AG04449 (cell line): ENCODE measurements at regions of chr12 and their contacts with region 1.

Region 1: DNA sequence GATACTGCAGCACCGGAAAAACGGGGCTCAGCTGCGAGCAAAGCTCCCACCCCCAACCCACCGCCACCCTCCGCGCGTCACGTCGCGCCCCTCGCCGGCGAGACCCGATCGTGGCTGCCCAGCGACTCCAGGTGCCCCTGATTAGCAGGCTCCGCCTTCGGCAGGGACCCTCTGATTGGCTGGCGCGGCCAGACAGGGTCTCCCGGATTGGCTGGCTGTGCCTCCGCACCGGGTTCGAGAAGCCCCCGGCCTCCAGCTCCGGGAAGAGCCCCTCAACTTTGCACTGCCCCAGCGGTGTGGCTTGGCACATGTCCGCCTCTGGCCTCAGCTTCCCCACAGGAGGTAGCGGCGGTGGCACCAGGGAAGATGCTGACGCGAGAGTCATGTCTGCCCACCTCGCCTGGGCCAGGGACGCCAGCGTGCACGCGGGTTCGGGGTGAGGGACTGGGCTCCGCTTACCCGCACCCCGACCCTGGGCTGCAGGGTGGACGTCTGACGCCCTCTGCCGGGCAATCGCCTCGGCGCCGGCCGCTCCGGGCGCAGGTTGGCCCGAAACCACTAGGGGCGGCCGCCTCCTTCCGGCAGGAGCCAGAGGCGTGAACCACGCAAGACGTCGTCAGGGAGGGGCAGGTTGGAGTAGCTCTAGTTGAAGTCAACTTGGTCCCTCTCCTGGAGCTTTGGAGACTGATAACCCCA is 498 bp upstream of the RHOF start:
- DNase-seq: peak; percentile 69
- H3K4me3 ChIP-seq: peak overlapping the region; percentile 59
- CTCF ChIP-seq: peak; percentile 100

Region 2: DNA sequence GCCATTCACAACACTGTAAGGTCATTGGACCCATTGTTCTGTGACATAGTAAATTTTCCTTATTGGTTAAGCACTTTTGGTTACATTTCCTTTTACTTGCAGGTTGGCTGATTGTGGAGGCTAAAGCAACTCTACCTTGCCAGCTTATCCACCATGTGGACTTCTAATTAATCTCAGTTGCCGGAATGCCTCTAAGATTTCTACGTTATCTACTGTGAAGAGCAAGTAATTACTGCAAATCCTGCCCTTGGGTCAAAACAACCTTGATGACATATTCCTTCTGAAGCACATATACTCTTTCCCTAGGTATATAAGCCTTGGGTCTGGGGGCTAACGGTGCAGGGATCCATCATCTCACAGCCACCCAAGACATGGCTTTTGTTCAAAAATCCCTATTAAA is 105.0 kb before region 1 on chr12:
- CTCF ChIA-PET with region 1: interaction called, 95 read pairs
- POLR2A ChIA-PET with region 1: no interaction called
- DNase-seq: no peak
- H3K4me3 ChIP-seq: no peak overlapping the region
- CTCF ChIP-seq: no peak

Region 3: GRCh38 chr12:121719926-121720414 is 74.0 kb before region 1 on chr12:
- CTCF ChIA-PET with region 1: interaction called, 30 read pairs
- POLR2A ChIA-PET with region 1: no interaction called
- DNase-seq: peak; percentile 44
- H3K4me3 ChIP-seq: no peak overlapping the region
- CTCF ChIP-seq: no peak

Region 4: DNA sequence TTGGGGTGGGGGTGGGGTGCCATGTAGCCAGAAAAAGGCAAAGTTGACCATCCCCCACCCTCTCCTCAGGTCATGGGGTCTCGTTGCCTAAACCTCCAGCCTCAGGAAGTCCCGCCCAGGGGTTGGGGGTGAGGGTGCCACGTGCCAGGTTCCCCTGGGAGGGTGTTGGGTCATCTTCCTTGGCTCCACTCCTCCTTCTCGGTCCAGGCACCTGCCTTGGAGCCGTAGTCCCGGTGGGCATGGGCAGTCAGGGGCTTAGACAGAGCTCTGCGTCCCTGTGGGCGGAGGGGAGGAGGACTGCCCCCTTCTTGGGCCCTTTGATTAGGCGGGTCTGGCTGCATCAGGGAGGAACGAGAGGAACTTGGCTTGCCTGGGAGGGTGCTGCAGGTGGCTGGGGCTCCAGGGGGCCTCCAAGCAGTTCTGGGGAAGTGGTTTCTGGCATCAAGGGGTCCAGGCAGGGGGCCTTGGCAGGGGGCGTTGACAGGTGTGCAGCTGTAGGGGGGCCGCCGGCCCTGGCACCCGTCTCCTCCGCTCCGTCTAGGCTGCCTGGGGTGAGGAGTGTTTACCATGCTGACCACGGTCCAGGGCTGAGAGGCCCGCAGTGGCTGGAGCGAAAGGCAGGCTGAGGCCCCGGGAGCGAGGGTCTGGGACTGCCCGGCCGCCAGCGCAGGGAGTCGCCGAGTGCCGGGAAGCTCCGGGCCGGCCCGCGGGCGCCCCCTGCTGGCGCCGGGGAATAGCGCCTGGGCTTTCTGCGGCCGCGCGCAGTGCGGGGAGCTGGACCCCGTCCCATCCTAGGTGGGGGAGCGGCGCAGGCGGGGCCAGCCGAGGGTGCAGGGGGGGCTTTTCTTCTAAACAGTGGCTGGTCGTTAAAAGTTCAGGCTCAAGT is 17.7 kb after region 1 on chr12:
- CTCF ChIA-PET with region 1: interaction called, 1,100 read pairs
- POLR2A ChIA-PET with region 1: interaction called, 39 read pairs
- DNase-seq: no peak
- H3K4me3 ChIP-seq: peak overlapping the region; percentile 72
- CTCF ChIP-seq: peak; percentile 83

Region 5: GRCh38 chr12:121872546-121873215 is 78.7 kb after region 1 on chr12:
- CTCF ChIA-PET with region 1: interaction called, 16 read pairs
- POLR2A ChIA-PET with region 1: no interaction called
- DNase-seq: peak; percentile 87
- H3K4me3 ChIP-seq: peak overlapping the region; percentile 23; the same call in 1 of the 2 replicates
- CTCF ChIP-seq: no peak

Region 6: GRCh38 chr12:121899590-121899989 is 105.6 kb after region 1 on chr12:
- CTCF ChIA-PET with region 1: interaction called, 230 read pairs
- POLR2A ChIA-PET with region 1: interaction called, 3 read pairs
- DNase-seq: no peak
- H3K4me3 ChIP-seq: no peak overlapping the region
- CTCF ChIP-seq: no peak

Region 7: DNA sequence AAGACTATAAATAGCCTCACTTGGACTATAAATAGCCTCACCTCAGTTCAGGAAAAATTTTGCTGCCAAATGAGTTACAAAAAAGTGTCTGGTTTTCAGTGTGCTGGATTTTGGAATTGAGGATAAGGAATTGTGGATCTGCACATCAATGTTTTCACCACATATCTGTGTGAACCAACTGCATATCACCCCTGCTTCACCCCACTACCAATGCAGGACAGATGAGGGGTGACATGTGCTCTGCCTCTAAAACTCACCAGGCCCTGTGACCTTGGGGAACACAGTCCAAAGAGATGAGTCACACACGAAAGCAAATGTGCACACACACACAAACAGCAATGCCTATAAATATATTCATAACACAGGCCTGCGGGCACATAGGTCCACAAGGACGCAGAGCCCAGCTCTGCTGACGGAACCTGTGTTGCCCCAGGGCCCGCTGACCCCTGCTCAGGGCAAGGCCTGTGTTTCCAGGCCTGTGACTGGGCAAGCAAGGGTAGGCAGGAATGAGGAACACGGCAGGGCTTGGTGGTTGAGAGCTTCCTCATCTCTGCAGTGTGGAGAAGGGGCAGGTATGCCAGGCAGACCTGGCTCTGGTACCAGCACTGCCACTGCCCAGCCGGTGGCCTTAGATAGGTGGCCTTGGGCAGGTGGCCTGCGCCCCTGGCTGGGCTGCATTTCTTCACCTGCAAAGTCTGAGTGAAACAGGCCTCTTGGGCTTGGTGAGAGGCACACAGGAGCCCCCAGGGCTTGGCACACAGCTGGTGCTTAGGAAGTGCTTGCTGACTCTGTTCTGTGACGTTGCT is 1268.9 kb after region 1 on chr12:
- CTCF ChIA-PET with region 1: no interaction called
- POLR2A ChIA-PET with region 1: no interaction called
- DNase-seq: no peak
- H3K4me3 ChIP-seq: no peak overlapping the region
- CTCF ChIP-seq: no peak